Transverse colon (tissue), 4 donors: ENCODE measurements at regions of chr16 and their contacts with region 1.

Region 1: GRCh38 chr16:72036098-72036497 is 18.2 kb upstream of the HP start:
- DNase-seq: no peak
- H3K4me3 ChIP-seq: no peak overlapping the region
- H3K27ac ChIP-seq: no peak overlapping the region
- H3K4me1 ChIP-seq: no peaks in the 10 kb centered on the region
- H3K27me3 ChIP-seq: no peaks in the 10 kb centered on the region
- CTCF ChIP-seq: no peak
- EP300 ChIP-seq: no peak
- POLR2A ChIP-seq: no peak

Region 2: DNA sequence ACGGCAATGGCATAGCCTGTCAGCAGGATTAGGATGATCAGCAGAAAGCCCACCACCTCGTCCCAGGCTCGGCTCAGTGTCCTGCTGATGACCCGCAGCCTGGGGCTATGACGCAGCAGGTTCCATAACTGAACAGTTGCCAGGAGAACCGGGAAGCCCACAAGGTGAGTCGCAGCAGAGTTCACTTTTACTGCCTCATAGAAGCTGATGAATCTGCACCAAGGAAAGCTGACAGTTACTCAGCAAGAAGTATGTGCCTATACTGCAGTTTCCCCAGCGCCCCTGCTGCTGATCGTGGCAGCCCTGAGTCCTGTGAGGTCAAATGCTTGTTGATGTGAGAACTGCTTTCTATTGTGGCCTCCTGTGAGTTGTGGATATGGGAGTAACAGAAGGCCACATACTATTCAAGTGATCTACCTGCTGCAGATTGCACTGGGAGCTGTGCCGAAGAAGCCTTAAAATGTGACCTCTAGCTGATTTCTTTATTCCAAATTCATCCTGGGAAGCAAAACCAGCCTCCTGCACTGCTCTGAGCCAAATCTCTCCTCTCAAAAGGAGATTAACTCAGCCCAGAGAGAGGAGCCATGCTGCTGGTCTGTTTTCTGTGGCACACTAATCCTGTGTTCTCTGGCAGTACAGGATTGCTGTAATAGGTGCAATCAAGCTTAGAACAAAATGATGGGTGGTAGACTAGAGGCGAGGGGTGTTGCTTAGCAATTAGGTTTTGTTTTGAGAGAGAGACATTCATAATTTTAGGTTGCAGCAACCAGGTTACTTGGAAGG is 102.0 kb before region 1 on chr16:
- in situ Hi-C with region 1: no loop called
- intact Hi-C with region 1: no loop called
- DNase-seq: no peak
- H3K4me3 ChIP-seq: no peak overlapping the region
- H3K27ac ChIP-seq: no peak overlapping the region
- H3K4me1 ChIP-seq: peaks cover 5 to 24% (median 12%) of the 10 kb centered on the region in 4 donors
- H3K27me3 ChIP-seq: no peaks in the 10 kb centered on the region
- CTCF ChIP-seq: no peak
- EP300 ChIP-seq: no peak
- POLR2A ChIP-seq: no peak

Region 3: DNA sequence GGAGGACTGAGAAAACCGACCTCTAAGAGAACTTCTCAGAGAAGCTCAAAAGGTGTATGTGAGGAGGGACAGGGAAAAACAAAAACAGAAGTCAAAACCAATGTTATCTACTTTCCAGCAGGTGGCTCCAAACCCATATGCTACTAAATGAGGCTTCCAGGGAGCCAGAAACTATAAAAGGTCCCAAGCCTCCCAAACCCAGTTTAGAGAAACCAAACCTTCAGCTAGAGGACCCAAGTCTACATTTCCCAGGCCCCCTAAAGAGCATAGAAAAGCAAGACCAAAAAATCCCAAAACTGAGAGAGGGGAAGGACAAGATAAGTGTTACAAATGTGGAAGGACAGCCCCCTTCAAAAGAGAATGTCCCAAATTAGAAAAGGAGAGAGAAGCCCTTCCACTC is 30.6 kb after region 1 on chr16:
- in situ Hi-C with region 1: no loop called
- intact Hi-C with region 1: loop called (anchors 1 kb)
- DNase-seq: no peak
- H3K4me3 ChIP-seq: no peak overlapping the region
- H3K27ac ChIP-seq: no peak overlapping the region
- H3K4me1 ChIP-seq: no peaks in the 10 kb centered on the region
- H3K27me3 ChIP-seq: no peaks in the 10 kb centered on the region
- CTCF ChIP-seq: peak in 4 of 5 experiments; percentile 36 to 51 (median 46)
- EP300 ChIP-seq: no peak
- POLR2A ChIP-seq: no peak

Region 4: DNA sequence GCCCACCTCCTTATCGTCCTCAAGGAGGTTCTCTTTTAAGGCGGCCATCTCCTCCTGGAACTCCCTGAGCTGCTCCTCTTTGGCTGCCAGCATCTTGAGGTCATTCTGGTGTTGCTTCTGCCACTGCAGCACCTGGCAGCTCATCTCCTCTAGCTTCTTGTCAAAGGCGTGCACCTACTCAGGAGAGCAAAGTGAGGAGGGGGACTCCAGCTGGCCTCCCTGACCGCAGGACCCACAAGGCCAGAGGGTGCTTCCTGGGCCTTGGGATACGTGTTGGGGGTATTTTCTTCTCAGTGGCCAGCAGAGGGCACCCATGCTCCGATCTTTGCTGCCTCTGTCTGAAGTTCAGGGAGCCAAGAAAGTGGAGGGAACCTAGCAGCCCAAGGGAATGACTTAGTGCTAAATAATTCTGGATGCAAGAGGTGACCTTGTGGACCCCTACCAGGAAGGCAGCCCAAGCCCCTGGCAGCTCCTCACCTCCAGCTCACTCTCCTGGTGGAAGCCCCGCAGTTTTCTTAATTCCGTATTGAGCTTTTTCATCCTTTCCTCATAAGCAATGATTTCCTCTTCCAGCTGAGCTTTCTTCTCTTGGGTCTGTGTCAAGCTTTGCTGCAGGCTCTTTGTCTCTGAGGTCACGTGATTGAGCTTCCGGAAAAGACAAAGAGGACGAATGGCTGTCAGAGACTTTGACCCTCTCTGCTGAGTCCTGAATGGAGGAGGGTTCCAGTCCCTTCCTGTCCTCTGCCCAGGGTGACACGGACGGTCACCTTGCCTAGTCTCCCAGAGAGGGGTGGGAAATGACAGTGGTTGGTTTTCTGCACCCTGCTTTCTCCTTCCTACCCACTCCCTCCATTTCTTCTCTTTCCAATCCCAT is 88.9 kb after region 1 on chr16:
- in situ Hi-C with region 1: no loop called
- intact Hi-C with region 1: no loop called
- DNase-seq: peak; percentile 80
- H3K4me3 ChIP-seq: no peak overlapping the region
- H3K27ac ChIP-seq: peak overlapping the region in 2 of 4 donors; percentile 27 to 36
- H3K4me1 ChIP-seq: peaks cover 0 to 11% (median 5%) of the 10 kb centered on the region in 4 donors
- H3K27me3 ChIP-seq: no peaks in the 10 kb centered on the region
- CTCF ChIP-seq: peak; percentile 65 to 80 (median 74)
- EP300 ChIP-seq: no peak
- POLR2A ChIP-seq: no peak